ENCODE measurements at regions of chr20 and their contacts with region 1.

Region 1: GRCh38 chr20:63009045-63009961 is 2.5 kb upstream of the BHLHE23 start:
- DNase-seq: peak; percentile 55 to 87 (median 69)
- ATAC-seq: peak in 3 of 4 donors; percentile 76 to 90 (median 83)
- H3K4me3 ChIP-seq: peak overlapping the region in 4 of 12 donors; percentile 1 to 34 (median 20)
- H3K27ac ChIP-seq: no peak overlapping the region
- H3K4me1 ChIP-seq: peaks cover 0 to 43% (median 17%) of the 10 kb centered on the region in 12 donors
- H3K27me3 ChIP-seq: peaks cover 61 to 98% (median 88%) of the 10 kb centered on the region in 9 donors
- CTCF ChIP-seq: peak; percentile 89 to 98 (median 95)
- POLR2A ChIP-seq: no peak

Region 2: DNA sequence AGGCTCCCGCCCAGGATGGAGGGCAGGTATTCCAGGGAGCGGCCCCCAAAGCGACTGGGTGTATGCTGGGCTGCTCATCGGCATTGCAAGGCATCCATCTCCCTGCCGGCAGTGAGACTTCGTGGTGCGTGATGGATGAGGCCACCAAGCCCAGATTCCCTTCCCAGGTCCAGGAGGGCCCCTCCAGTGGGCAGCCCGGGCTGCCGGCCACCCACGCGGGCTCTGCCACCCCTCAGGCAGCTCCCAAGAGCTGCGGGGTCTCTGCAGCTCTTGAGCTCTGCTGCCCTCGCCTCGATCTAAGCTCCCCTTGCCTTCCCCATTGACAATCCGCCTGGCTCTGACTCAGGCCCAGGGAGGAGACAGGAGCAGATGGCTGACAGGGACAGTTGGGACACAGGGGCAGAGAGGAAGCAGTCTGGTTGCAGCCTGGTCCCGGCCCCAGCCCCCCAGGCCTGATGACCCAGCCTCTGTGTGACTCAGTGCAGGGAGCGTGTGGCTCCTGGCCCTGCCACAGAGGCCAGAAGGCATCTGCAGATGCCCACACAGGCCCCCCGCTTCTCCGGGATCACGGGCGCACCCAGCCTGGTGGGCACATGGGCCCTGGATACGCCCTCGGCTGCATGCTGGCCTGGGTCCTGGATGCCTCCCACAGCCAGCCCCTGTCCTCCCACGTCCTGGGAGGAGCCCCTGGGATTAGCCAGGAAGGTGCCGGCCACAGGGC is 334.0 kb before region 1 on chr20:
- intact Hi-C with region 1: loop called in 2 of 10 experiments (anchors 10 kb)
- DNase-seq: no peak
- ATAC-seq: peak in 1 of 4 donors; percentile 42
- H3K4me3 ChIP-seq: no peak overlapping the region
- H3K27ac ChIP-seq: no peak overlapping the region
- H3K4me1 ChIP-seq: peaks cover 0 to 19% (median 0%) of the 10 kb centered on the region in 12 donors
- H3K27me3 ChIP-seq: peaks cover 0 to 17% (median 0%) of the 10 kb centered on the region in 9 donors
- CTCF ChIP-seq: no peak
- POLR2A ChIP-seq: no peak

Region 3: DNA sequence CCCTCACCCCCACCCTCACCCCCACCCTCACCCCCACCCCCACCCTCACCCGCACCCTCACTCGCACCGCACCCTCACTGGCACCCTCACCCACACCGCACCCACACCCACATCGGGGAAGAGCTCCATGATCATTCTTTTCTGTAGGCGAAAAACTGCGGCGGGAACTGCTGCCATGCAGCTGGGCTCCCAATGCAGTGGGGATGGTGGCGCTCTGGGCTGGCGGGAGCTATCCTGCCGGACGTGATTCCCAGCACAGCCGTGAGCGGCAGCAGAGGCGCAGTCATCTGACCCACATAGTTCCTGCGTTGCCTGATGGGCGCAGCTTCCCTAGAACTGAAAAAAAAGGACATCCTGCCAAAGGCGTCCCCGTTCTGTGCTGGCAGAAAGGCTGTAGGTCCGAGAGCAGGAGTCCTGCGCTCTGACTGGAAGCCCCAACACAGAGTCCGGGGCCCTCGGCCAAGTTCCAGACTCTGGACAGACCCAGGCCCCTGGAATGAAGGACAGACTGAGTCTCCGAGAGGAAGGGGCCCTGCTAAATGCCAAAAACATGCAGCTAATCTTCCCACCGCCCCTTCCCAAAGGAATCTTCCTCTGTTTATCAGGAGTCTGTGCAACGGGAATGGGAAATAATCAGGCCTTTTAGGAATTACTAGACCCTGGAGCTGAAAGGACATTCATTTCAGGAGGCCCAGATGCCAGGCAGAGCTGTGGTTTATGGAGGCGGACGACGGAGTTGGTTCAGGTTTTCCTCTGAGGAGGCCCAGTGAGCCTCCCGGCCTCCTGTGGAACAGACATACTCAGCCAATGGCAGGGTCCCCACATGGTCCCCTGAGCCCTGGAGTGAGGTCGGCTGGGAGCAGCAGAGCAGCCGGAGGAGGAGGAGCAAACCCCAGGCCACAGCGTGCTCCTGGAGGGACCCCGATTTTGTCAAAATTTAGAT is 133.6 kb before region 1 on chr20:
- intact Hi-C with region 1: loop called (anchors 1 to 5 kb)
- DNase-seq: peak; percentile 78 to 88 (median 84)
- ATAC-seq: peak; percentile 56 to 91 (median 85)
- H3K4me3 ChIP-seq: peak overlapping the region in 7 of 12 donors; percentile 15 to 36 (median 27)
- H3K27ac ChIP-seq: peak overlapping the region in 11 of 12 donors; percentile 59 to 89 (median 81)
- H3K4me1 ChIP-seq: peaks cover 8 to 34% (median 22%) of the 10 kb centered on the region in 12 donors
- H3K27me3 ChIP-seq: no peaks in the 10 kb centered on the region
- CTCF ChIP-seq: peak in 11 of 12 donors; percentile 12 to 71 (median 46)
- POLR2A ChIP-seq: no peak

Region 4: DNA sequence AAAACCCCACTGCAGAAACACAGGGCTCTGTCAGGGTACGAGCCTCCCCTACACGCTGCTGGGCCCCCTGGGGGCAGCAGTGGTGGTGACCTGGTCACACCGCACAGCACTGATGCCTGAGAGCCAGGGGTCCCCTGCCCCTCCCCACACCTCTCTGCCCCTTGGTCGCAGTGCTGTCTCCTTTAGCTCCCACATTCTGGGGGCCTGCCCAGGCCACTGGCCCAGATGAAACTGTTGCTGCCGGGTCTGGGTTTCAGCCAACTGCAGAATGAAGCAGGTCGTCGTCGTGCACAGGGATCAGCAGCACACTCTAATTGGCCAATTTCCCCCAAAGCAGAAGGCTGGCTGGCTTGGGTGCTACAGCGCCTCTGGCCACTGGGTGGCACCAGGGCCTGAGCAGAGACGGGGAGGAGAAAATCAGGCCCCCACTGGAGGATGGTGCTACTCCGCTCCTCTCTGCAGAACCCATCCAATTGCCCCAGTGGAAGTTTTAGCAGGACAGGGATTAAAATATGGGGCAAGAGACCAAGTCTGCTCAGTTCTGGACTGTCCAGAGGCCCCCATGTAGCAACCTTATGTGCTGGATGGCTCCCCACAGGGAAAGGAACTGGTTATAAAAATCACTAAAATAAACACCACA is 109.1 kb before region 1 on chr20:
- intact Hi-C with region 1: loop called (anchors 1 to 10 kb)
- DNase-seq: peak; percentile 66 to 83 (median 73)
- ATAC-seq: peak; percentile 84 to 92 (median 90)
- H3K4me3 ChIP-seq: no peak overlapping the region
- H3K27ac ChIP-seq: no peak overlapping the region
- H3K4me1 ChIP-seq: peaks cover 6 to 28% (median 16%) of the 10 kb centered on the region in 12 donors
- H3K27me3 ChIP-seq: no peaks in the 10 kb centered on the region
- CTCF ChIP-seq: peak; percentile 76 to 93 (median 86)
- POLR2A ChIP-seq: no peak

Region 5: DNA sequence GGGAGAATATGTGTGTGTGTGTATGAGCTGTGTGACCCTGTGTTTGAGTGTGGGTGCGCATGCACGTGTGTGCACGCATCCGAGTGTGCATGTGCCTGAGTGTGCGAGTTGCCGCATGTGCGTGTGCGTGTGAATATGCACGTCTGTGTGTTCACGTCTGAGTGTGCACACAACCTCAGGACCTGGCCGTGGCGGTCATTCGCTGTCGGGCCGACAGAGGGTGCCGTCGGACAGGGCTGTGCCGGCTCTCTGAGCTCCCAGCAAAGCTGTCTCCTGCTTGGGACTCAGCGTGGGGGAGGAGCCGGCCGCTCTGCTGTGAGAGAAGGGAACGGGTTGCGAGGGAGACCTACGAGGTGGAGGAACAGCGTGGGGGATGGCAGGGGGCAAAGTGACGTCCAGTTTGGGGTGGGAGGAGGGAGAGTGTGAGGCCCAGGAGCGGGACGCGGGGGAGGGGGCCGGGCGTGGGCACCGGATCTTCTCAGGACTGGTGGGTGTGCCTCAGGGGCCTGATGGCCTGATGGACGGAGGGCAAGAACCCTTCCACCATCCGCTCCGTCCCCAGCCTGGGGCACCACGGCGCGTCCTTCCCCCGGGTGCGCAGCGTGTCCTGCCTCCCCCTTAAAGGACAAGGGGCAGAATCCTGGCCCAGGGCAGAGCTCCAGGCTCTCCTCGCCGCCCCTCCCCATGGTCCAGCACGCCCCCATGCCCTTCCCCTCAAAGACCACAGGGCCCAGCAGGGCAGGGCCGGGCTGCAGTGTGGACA is 36.9 kb before region 1 on chr20:
- intact Hi-C with region 1: loop called in 8 of 10 experiments (anchors 1 to 2 kb)
- DNase-seq: peak; percentile 82 to 92 (median 88)
- ATAC-seq: peak; percentile 85 to 97 (median 94)
- H3K4me3 ChIP-seq: peak overlapping the region in 9 of 12 donors; percentile 23 to 45 (median 33)
- H3K27ac ChIP-seq: no peak overlapping the region
- H3K4me1 ChIP-seq: peaks cover 0 to 12% (median 6%) of the 10 kb centered on the region in 12 donors
- H3K27me3 ChIP-seq: peaks cover 25 to 66% (median 39%) of the 10 kb centered on the region in 9 donors
- CTCF ChIP-seq: peak; percentile 75 to 91 (median 86)
- POLR2A ChIP-seq: no peak

Measured in heart left ventricle (tissue), 16 donors.